CD4-positive, alpha-beta memory T cell (primary cell): ENCODE measurements at regions of chr10 and their contacts with region 1.

Region 1: DNA sequence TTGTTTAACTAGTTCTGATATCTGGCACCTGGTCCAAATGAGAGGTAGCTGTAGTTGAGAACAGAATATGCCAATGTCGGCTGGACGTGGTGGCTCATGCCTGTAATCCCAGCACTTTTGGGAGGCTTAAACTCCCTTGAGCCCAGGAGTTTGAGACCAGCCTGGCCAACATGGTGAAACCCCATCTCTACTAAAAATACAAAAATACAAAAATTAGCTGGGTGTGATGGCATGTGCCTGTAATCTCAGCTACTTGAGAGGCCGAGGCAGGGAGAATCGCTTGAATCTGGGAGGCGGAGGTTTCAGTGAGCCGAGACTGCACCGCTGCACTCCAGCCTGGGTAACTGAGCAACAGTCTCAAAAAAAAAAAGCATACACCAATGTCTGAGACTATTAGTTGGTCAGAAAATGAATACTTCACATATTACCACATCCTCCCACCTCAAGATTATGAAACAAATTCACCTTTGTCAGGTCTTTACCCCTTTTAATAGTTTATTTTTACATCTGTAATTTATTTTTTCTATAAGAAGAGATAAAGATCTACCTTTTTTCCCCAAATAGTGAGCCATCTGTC is 38.8 kb downstream of the EPC1 start:
- DNase-seq: peak in 3 of 5 donors; percentile 21 to 25 (median 22)
- H3K4me3 ChIP-seq: no peak overlapping the region
- H3K4me3 Mint-ChIP-seq: peak overlapping the region; percentile 63 to 81 (median 71)
- H3K27ac ChIP-seq: peak overlapping the region; percentile 39
- H3K27ac Mint-ChIP-seq: peak overlapping the region; percentile 62 to 94 (median 88)
- H3K4me1 ChIP-seq: peaks cover 78% of the 10 kb centered on the region
- H3K4me1 Mint-ChIP-seq: peaks cover 52 to 80% (median 66%) of the 10 kb centered on the region in 4 donors
- H3K27me3 ChIP-seq: no peaks in the 10 kb centered on the region
- H3K27me3 Mint-ChIP-seq: no peaks in the 10 kb centered on the region

Region 2: DNA sequence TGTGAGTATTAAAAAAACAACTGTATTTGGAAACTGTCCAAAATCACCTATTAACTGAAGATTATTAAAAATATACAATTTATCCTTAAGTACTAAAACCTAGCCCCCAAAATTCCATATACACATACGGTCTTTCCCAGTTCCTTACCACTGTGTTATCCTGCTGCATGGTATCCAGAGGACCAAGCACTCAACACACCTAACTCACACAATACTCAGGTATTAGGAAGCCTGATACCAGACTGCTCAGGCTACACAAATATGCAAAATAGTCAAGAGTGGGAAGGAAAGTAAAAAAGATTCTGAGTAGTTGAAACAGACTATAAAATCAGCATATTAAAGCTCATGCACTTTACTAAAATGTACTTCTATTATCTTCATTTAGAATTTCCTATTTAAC is 28.3 kb before region 1 on chr10:
- CTCF ChIA-PET with region 1: no interaction called
- POLR2A ChIA-PET with region 1: no interaction called
- intact Hi-C with region 1: no loop called
- DNase-seq: no peak
- H3K4me3 ChIP-seq: no peak overlapping the region
- H3K4me3 Mint-ChIP-seq: no peak overlapping the region
- H3K27ac ChIP-seq: no peak overlapping the region
- H3K27ac Mint-ChIP-seq: peak overlapping the region in 3 of 7 donors; percentile 25 to 48 (median 42)
- H3K4me1 ChIP-seq: peaks cover 6% of the 10 kb centered on the region
- H3K4me1 Mint-ChIP-seq: peaks cover 8 to 26% (median 16%) of the 10 kb centered on the region in 4 donors
- H3K27me3 ChIP-seq: no peaks in the 10 kb centered on the region
- H3K27me3 Mint-ChIP-seq: no peaks in the 10 kb centered on the region

Region 3: DNA sequence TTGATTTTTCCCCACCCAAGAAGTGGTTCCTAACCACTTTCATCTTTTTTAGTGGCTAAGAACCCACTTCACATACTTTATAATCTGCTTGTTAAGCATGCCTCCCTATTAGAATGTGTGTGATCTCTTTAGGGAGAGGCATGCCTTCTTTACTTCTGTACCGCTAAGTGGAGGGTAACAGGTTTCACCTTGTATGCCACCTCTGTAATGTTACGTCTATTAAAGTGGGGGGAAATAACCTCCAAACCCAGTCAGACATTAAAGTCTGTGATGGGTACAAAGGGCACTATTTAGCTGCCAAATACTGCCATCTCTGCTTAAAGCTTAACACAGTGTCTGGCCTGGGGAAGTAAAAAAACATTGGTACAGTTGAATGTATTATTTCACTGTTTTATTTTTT is 13.1 kb before region 1 on chr10:
- CTCF ChIA-PET with region 1: no interaction called
- POLR2A ChIA-PET with region 1: interaction called, 3 read pairs
- intact Hi-C with region 1: loop called (anchors 2 kb)
- DNase-seq: no peak
- H3K4me3 ChIP-seq: no peak overlapping the region
- H3K4me3 Mint-ChIP-seq: no peak overlapping the region
- H3K27ac ChIP-seq: peak overlapping the region; percentile 19
- H3K27ac Mint-ChIP-seq: peak overlapping the region in 5 of 7 donors; percentile 33 to 80 (median 62)
- H3K4me1 ChIP-seq: peaks cover 50% of the 10 kb centered on the region
- H3K4me1 Mint-ChIP-seq: peaks cover 34 to 61% (median 42%) of the 10 kb centered on the region in 4 donors
- H3K27me3 ChIP-seq: no peaks in the 10 kb centered on the region
- H3K27me3 Mint-ChIP-seq: no peaks in the 10 kb centered on the region

Region 4: DNA sequence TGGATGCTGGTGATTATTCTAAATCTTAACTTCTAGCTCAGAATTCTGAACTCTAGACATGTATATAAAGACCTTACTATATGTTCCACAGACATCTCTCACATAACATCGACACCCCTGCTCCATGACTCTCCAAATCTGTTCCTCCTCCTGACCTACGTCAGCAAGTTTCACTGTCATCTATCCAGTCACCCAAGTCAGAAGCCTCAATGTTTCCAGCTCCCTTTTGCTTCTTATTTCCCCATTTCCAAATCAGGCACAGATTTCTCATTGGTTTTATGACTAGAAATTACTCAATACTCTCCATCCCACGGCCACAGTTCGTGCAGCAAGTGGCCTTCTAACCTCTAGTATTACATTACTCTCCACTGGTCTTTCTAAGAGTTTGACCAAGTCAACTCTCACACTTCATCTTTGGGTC is 10.4 kb after region 1 on chr10:
- CTCF ChIA-PET with region 1: no interaction called
- POLR2A ChIA-PET with region 1: no interaction called
- intact Hi-C with region 1: loop called (anchors 1 kb)
- DNase-seq: peak in 2 of 5 donors; percentile 17 to 63
- H3K4me3 ChIP-seq: no peak overlapping the region
- H3K4me3 Mint-ChIP-seq: peak overlapping the region; percentile 53 to 81 (median 63)
- H3K27ac ChIP-seq: peak overlapping the region; percentile 48
- H3K27ac Mint-ChIP-seq: peak overlapping the region; percentile 54 to 95 (median 82)
- H3K4me1 ChIP-seq: peaks cover 95% of the 10 kb centered on the region
- H3K4me1 Mint-ChIP-seq: peaks cover 68 to 88% (median 80%) of the 10 kb centered on the region in 4 donors
- H3K27me3 ChIP-seq: no peaks in the 10 kb centered on the region
- H3K27me3 Mint-ChIP-seq: no peaks in the 10 kb centered on the region

Region 5: GRCh38 chr10:32338262-32338661 is 30.1 kb after region 1 on chr10:
- CTCF ChIA-PET with region 1: interaction called, 3 read pairs
- POLR2A ChIA-PET with region 1: interaction called, 3 read pairs
- intact Hi-C with region 1: loop called (anchors 2 kb)
- DNase-seq: no peak
- H3K4me3 ChIP-seq: no peak overlapping the region
- H3K4me3 Mint-ChIP-seq: peak overlapping the region in 7 of 8 donors; percentile 41 to 84 (median 65)
- H3K27ac ChIP-seq: no peak overlapping the region
- H3K27ac Mint-ChIP-seq: peak overlapping the region; percentile 8 to 89 (median 58)
- H3K4me1 ChIP-seq: peaks cover 96% of the 10 kb centered on the region
- H3K4me1 Mint-ChIP-seq: peaks cover 77 to 98% (median 89%) of the 10 kb centered on the region in 4 donors
- H3K27me3 ChIP-seq: no peaks in the 10 kb centered on the region
- H3K27me3 Mint-ChIP-seq: no peaks in the 10 kb centered on the region

Region 6: DNA sequence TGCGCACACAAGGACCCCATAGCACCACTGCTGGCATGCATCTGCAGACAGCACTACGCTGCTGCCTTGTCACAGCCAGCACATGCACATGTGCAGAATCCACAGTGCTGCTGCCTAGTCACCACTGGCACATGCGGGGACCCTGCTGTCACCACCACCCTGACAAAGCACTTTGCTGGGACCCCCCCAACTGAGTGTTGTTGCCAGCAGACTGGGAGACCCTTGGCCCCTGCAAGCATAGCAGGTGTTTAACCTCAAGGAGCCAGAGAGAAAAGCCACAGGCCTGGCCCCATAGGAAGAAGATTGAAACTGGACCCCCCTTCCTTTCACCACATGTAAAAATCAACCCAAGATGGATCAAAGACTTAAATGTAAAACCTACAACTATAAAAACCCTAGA is 438.8 kb after region 1 on chr10:
- CTCF ChIA-PET with region 1: no interaction called
- POLR2A ChIA-PET with region 1: no interaction called
- intact Hi-C with region 1: no loop called
- DNase-seq: peak in 1 of 5 donors; percentile 24
- H3K4me3 ChIP-seq: no peak overlapping the region
- H3K4me3 Mint-ChIP-seq: no peak overlapping the region
- H3K27ac ChIP-seq: no peak overlapping the region
- H3K27ac Mint-ChIP-seq: peak overlapping the region in 1 of 7 donors; percentile 28
- H3K4me1 ChIP-seq: no peaks in the 10 kb centered on the region
- H3K4me1 Mint-ChIP-seq: no peaks in the 10 kb centered on the region
- H3K27me3 ChIP-seq: no peaks in the 10 kb centered on the region
- H3K27me3 Mint-ChIP-seq: no peaks in the 10 kb centered on the region